ENCODE measurements at regions of chr22 and their contacts with region 1.

Region 1: GRCh38 chr22:35761037-35761436 is 43.4 kb downstream of the APOL5 start:
- DNase-seq: no peak
- ATAC-seq: no peak
- H3K4me3 ChIP-seq: no peak overlapping the region
- H3K27ac ChIP-seq: no peak overlapping the region
- H3K4me1 ChIP-seq: no peaks in the 10 kb centered on the region
- H3K27me3 ChIP-seq: no peaks in the 10 kb centered on the region

Region 2: GRCh38 chr22:35883031-35883620 is 122.1 kb after region 1 on chr22:
- intact Hi-C with region 1: no loop called
- DNase-seq: no peak
- ATAC-seq: no peak
- H3K4me3 ChIP-seq: no peak overlapping the region
- H3K27ac ChIP-seq: peak overlapping the region in 1 of 2 donors; percentile 67
- H3K4me1 ChIP-seq: peaks cover 11 to 20% of the 10 kb centered on the region in 2 donors
- H3K27me3 ChIP-seq: no peaks in the 10 kb centered on the region

Region 3: GRCh38 chr22:35914665-35915476 is 153.8 kb after region 1 on chr22:
- intact Hi-C with region 1: loop called (anchors 5 to 10 kb)
- DNase-seq: peak in 1 of 2 donors; percentile 61
- ATAC-seq: peak; percentile 89
- H3K4me3 ChIP-seq: peak overlapping the region; percentile 58 to 86
- H3K27ac ChIP-seq: peak overlapping the region; percentile 39 to 82
- H3K4me1 ChIP-seq: peaks cover 0 to 9% of the 10 kb centered on the region in 2 donors
- H3K27me3 ChIP-seq: no peaks in the 10 kb centered on the region